ENCODE measurements at regions of chr3 and their contacts with region 1.

Region 1: DNA sequence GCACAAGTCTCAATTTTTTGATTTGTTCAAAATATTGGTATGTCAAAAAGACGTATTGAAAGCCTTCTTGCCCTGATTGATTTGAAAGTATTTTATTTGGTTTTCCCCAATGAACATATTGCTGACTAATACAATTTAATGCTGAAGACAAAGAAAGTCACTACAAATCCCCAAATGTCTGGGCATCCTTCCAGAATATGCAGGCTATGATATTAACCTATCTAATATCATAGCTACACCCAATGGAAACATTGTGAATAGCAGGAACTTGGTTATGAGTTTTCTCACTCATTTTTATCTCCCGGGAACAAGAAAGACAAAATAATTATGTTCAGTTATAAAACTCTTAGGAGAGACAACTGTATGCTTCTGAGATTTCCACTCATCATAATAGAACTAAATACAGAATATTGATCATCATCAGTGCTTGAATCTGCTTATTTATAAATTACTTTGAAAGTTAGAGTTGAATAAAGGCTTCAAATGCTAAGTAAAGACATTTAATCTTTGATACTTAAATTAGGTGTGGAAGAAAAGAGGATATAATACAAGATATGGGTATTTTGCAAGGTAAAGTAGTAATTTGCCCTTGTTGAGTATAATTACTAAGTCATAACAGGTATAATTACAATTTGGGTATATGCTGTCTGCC is 483.9 kb downstream of the RBMS3 start:
- DNase-seq: no peak
- H3K4me3 ChIP-seq: no peak overlapping the region
- H3K27ac ChIP-seq: no peak overlapping the region
- H3K4me1 ChIP-seq: peaks cover 0 to 32% (median 17%) of the 10 kb centered on the region in 4 donors
- H3K27me3 ChIP-seq: no peaks in the 10 kb centered on the region
- CTCF ChIP-seq: peak; percentile 29 to 59 (median 53)
- EP300 ChIP-seq: no peak
- POLR2A ChIP-seq: no peak

Region 2: GRCh38 chr3:28916713-28917499 is 847.8 kb before region 1 on chr3:
- intact Hi-C with region 1: loop called (anchors 5 kb)
- DNase-seq: peak; percentile 83
- H3K4me3 ChIP-seq: peak overlapping the region; percentile 3 to 44 (median 39)
- H3K27ac ChIP-seq: peak overlapping the region; percentile 40 to 67 (median 62)
- H3K4me1 ChIP-seq: peaks cover 0 to 16% (median 8%) of the 10 kb centered on the region in 4 donors
- H3K27me3 ChIP-seq: no peaks in the 10 kb centered on the region
- CTCF ChIP-seq: peak; percentile 23 to 49 (median 40)
- EP300 ChIP-seq: no peak
- POLR2A ChIP-seq: no peak

Region 3: DNA sequence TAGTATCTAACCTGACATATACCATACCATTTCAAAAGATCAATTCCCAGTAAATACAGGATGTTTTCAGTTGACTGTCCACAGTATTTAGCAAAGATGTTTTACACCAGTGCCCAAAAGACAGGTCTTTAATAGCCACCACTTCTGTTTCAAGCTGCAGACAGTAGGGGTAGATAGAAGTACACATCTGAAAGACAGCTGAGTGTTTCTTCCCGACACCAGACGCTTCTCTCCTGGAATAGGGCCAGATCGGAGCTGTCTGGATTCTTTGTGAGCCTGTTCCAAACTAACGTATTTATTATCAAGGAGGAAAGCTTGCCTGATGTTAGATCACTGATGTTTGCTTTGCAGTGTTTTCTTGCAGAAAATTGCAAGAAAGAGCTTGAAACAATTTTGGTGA is 619.9 kb before region 1 on chr3:
- intact Hi-C with region 1: loop called (anchors 10 kb)
- DNase-seq: peak; percentile 71
- H3K4me3 ChIP-seq: no peak overlapping the region
- H3K27ac ChIP-seq: no peak overlapping the region
- H3K4me1 ChIP-seq: peaks cover 0 to 39% (median 38%) of the 10 kb centered on the region in 4 donors
- H3K27me3 ChIP-seq: no peaks in the 10 kb centered on the region
- CTCF ChIP-seq: no peak
- EP300 ChIP-seq: no peak
- POLR2A ChIP-seq: no peak

Measured in sigmoid colon (tissue), 7 donors.